AG04450 (cell line): ENCODE measurements at regions of chr13 and their contacts with region 1.

Region 1: GRCh38 chr13:84896128-84896527 is 903.1 kb downstream of the SLITRK6 start:
- DNase-seq: peak; percentile 43
- H3K4me3 ChIP-seq: no peak overlapping the region
- H3K27ac ChIP-seq: no peak overlapping the region
- H3K27me3 ChIP-seq: no peaks in the 10 kb centered on the region
- CTCF ChIP-seq: peak; percentile 61

Region 2: GRCh38 chr13:84912720-84913119 is 16.6 kb after region 1 on chr13:
- CTCF ChIA-PET with region 1: interaction called, 10 read pairs
- POLR2A ChIA-PET with region 1: no interaction called
- DNase-seq: no peak
- H3K4me3 ChIP-seq: no peak overlapping the region
- H3K27ac ChIP-seq: no peak overlapping the region
- H3K27me3 ChIP-seq: no peaks in the 10 kb centered on the region
- CTCF ChIP-seq: no peak

Region 3: GRCh38 chr13:85806553-85807175 is 910.5 kb after region 1 on chr13:
- CTCF ChIA-PET with region 1: interaction called, 23 read pairs
- POLR2A ChIA-PET with region 1: no interaction called
- DNase-seq: peak; percentile 47
- H3K4me3 ChIP-seq: no peak overlapping the region
- H3K27ac ChIP-seq: no peak overlapping the region
- H3K27me3 ChIP-seq: no peaks in the 10 kb centered on the region
- CTCF ChIP-seq: peak; percentile 64

Region 4: DNA sequence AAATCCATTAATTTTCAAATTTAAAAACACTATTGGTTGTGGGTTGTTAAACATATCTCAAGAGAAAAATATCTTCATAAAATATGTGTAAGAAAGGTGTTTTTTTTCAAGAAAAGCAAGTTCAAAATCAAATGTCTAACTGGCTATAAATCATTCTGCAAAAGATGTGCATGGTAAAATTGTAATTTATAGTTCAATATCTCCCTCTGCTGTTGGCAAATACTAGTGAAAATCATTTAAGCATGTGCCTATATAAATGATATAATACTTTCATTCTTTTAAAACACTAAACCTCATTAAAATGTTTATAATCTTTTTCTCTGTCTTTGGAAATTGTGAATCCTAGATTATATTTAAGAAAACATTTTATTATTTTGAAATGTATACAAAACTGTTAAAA is 920.3 kb after region 1 on chr13:
- CTCF ChIA-PET with region 1: interaction called, 15 read pairs
- POLR2A ChIA-PET with region 1: no interaction called
- DNase-seq: no peak
- H3K4me3 ChIP-seq: no peak overlapping the region
- H3K27ac ChIP-seq: no peak overlapping the region
- H3K27me3 ChIP-seq: no peaks in the 10 kb centered on the region
- CTCF ChIP-seq: peak; percentile 31; the same call in 1 of the 2 replicates

Region 5: DNA sequence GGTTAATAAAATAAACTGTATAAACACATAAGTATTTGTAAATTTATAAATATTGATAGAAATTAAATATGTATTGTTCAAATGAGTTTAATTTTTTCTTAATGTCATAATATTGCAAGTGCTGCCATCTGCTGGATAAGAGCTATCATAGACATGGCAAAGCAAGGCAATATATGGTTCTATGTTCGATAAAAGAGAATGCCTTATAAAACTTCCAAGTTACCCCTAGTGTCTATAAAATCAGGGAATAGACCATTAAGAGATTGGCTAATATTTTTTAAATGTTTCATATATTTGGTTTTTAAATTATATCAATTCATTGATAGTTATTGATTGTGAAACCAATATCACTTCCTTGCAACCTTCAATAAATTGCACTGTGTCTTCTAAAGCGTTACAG is 932.0 kb after region 1 on chr13:
- CTCF ChIA-PET with region 1: interaction called, 27 read pairs
- POLR2A ChIA-PET with region 1: no interaction called
- DNase-seq: peak; percentile 2
- H3K4me3 ChIP-seq: no peak overlapping the region
- H3K27ac ChIP-seq: no peak overlapping the region
- H3K27me3 ChIP-seq: no peaks in the 10 kb centered on the region
- CTCF ChIP-seq: peak; percentile 73